Ascending aorta (tissue), 2 donors: ENCODE measurements at regions of chr18 and their contacts with region 1.

Region 1: DNA sequence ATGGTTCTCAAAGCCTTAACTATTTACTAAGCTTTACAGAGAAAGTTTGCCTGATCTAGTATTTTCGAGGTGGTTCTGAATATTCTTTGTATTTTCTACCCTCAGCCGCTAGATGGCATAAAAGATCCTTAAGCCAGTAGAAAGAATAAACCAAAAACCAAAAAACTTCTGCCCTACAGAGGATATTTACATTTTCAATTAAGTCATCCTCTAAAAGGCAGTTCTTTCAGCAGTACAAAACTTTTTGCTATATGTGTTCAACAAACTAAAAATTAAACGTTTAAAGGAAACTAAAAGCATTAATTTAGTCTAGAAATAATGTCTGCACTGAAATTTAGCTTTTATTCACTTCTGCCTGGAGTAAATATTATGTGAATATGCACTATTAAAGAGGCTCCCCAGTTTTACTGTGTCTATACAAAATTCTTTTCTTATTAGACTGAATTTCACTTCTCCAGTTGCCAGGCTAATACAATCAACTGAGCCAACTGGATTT is 297.5 kb downstream of the PIEZO2 start:
- DNase-seq: no peak
- H3K4me3 ChIP-seq: no peak overlapping the region
- H3K27ac ChIP-seq: no peak overlapping the region
- H3K4me1 ChIP-seq: no peaks in the 10 kb centered on the region
- H3K27me3 ChIP-seq: no peaks in the 10 kb centered on the region
- CTCF ChIP-seq: peak; percentile 24 to 79 (median 60)

Region 2: DNA sequence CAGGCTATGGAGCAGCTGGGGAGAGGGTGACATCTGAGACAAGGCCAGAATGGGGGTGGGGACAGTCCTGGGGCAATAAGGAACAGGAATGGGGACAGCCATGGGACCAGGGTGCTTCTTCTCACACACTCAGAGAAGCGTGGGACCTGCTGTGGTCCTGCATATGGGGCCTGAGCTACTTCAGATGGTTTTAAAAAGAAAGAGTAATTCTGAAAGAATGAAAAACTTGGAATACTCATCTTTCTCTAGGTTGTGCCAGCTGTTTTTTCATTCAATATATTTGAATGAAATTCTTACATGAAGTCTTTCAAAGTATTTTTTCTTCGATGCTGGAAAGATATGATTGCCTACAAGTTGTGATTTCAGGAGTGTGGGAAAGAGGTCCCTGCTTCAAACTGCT is 624.9 kb before region 1 on chr18:
- intact Hi-C with region 1: no loop called
- DNase-seq: no peak
- H3K4me3 ChIP-seq: no peak overlapping the region
- H3K27ac ChIP-seq: no peak overlapping the region
- H3K4me1 ChIP-seq: no peaks in the 10 kb centered on the region
- H3K27me3 ChIP-seq: no peaks in the 10 kb centered on the region
- CTCF ChIP-seq: no peak

Region 3: GRCh38 chr18:11040823-11041656 is 189.2 kb after region 1 on chr18:
- intact Hi-C with region 1: loop called (anchors 2 kb)
- DNase-seq: no peak
- H3K4me3 ChIP-seq: no peak overlapping the region
- H3K27ac ChIP-seq: no peak overlapping the region
- H3K4me1 ChIP-seq: no peaks in the 10 kb centered on the region
- H3K27me3 ChIP-seq: no peaks in the 10 kb centered on the region
- CTCF ChIP-seq: peak; percentile 34 to 69 (median 58)

Region 4: GRCh38 chr18:11149441-11150270 is 297.8 kb after region 1 on chr18 and contains the start of gene PIEZO2:
- intact Hi-C with region 1: loop called (anchors 2 kb)
- DNase-seq: peak in 1 of 2 donors; percentile 82
- H3K4me3 ChIP-seq: peak within 1 kb of the TSS; percentile 57 to 84
- H3K27ac ChIP-seq: no peak within 1 kb of the TSS
- H3K4me1 ChIP-seq: peaks cover 10% of the 10 kb centered on the region in 2 donors
- H3K27me3 ChIP-seq: peaks cover 9% of the 10 kb centered on the region
- CTCF ChIP-seq: no peak
- total RNA-seq, gene PIEZO2: 3.1 TPM

Region 5: GRCh38 chr18:11553098-11553940 is 701.4 kb after region 1 on chr18:
- intact Hi-C with region 1: loop called (anchors 1 kb)
- DNase-seq: no peak
- H3K4me3 ChIP-seq: no peak overlapping the region
- H3K27ac ChIP-seq: no peak overlapping the region
- H3K4me1 ChIP-seq: no peaks in the 10 kb centered on the region
- H3K27me3 ChIP-seq: no peaks in the 10 kb centered on the region
- CTCF ChIP-seq: peak; percentile 68 to 90 (median 87)